ENCODE measurements at regions of chr7 and their contacts with region 1.

Region 1: GRCh38 chr7:75072978-75073282 is 672 bp downstream of the RCC1L start:
- DNase-seq: no peak
- H3K4me3 ChIP-seq: peak overlapping the region; percentile 76 to 87 (median 82)
- H3K27ac ChIP-seq: peak overlapping the region; percentile 76
- H3K4me1 ChIP-seq: peaks cover 3% of the 10 kb centered on the region
- H3K27me3 ChIP-seq: no peaks in the 10 kb centered on the region
- CTCF ChIP-seq: no peak

Region 2: DNA sequence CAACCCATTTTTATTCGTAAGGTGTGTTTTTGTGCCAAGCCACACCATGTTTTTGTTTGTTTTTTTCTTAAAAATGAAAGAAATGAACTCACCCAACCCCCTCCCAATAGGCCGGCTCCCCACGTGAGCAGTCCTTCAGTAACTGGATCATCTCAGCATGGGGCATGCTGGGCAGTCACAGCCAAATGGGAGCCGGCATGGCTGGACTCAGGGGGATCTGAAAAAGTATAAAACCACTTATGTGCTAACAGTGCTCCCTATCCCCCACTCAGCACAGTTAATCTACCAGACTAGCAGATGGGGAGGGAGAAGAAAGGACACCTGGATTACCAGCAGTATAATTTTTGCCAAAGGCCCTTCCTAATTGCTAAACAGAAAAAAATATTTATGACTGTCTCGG is 1590.2 kb before region 1 on chr7:
- CTCF ChIA-PET with region 1: no interaction called
- dilution Hi-C with region 1: no loop called
- in situ Hi-C with region 1: no loop called
- intact Hi-C with region 1: no loop called
- DNase-seq: no peak
- H3K4me3 ChIP-seq: no peak overlapping the region
- H3K27ac ChIP-seq: no peak overlapping the region
- H3K4me1 ChIP-seq: no peaks in the 10 kb centered on the region
- H3K27me3 ChIP-seq: no peaks in the 10 kb centered on the region
- CTCF ChIP-seq: no peak

Region 3: GRCh38 chr7:74429153-74429747 is 643.7 kb before region 1 on chr7:
- CTCF ChIA-PET with region 1: no interaction called
- dilution Hi-C with region 1: no loop called
- in situ Hi-C with region 1: no loop called
- intact Hi-C with region 1: no loop called
- DNase-seq: no peak
- H3K4me3 ChIP-seq: no peak overlapping the region
- H3K27ac ChIP-seq: no peak overlapping the region
- H3K4me1 ChIP-seq: no peaks in the 10 kb centered on the region
- H3K27me3 ChIP-seq: no peaks in the 10 kb centered on the region
- CTCF ChIP-seq: no peak

Region 4: GRCh38 chr7:75727881-75728592 is 655.1 kb after region 1 on chr7:
- CTCF ChIA-PET with region 1: interaction called, 20 read pairs
- dilution Hi-C with region 1: no loop called
- in situ Hi-C with region 1: no loop called
- intact Hi-C with region 1: no loop called
- DNase-seq: peak; percentile 85
- H3K4me3 ChIP-seq: peak overlapping the region in 1 of 3 experiments; percentile 15
- H3K27ac ChIP-seq: peak overlapping the region; percentile 56
- H3K4me1 ChIP-seq: peaks cover 28% of the 10 kb centered on the region
- H3K27me3 ChIP-seq: no peaks in the 10 kb centered on the region
- CTCF ChIP-seq: no peak

Measured in mammary epithelial cell (primary cell).